ENCODE measurements at regions of chr3 and their contacts with region 1.

Region 1: GRCh38 chr3:184711493-184712247 is at the start of gene MAGEF1:
- DNase-seq: peak; percentile 79
- ATAC-seq: peak; percentile 97
- H3K4me3 ChIP-seq: peak within 1 kb of the TSS; percentile 75 to 94 (median 83)
- H3K27ac ChIP-seq: peak within 1 kb of the TSS; percentile 96
- H3K4me1 ChIP-seq: peaks cover 27% of the 10 kb centered on the region
- H3K27me3 ChIP-seq: no peaks in the 10 kb centered on the region; a peak in 1 of 5 replicates
- CTCF ChIP-seq: no peak
- EP300 ChIP-seq: no peak
- POLR2A ChIP-seq: peak; percentile 88 to 90
- RAD21 ChIP-seq: no peak; the same call in none of the 2 replicates
- total RNA-seq, gene MAGEF1: 60.5 and 62.4 TPM in 2 replicates

Region 2: GRCh38 chr3:184568924-184569829 is 142.5 kb before region 1 on chr3:
- CTCF ChIA-PET with region 1: no interaction called
- POLR2A ChIA-PET with region 1: no interaction called
- in situ Hi-C with region 1: no loop called
- intact Hi-C with region 1: loop called (anchors 5 kb)
- DNase-seq: no peak
- ATAC-seq: peak; percentile 31
- H3K4me3 ChIP-seq: peak overlapping the region in 2 of 3 experiments; percentile 7 to 33; a peak in 1 of 6 replicates
- H3K27ac ChIP-seq: no peak overlapping the region
- H3K4me1 ChIP-seq: no peaks in the 10 kb centered on the region
- H3K27me3 ChIP-seq: peaks cover 21 to 76% of the 10 kb centered on the region in 2 experiments
- CTCF ChIP-seq: no peak
- EP300 ChIP-seq: no peak
- POLR2A ChIP-seq: no peak
- RAD21 ChIP-seq: no peak

Region 3: GRCh38 chr3:185613016-185613415 is 901.3 kb after region 1 on chr3:
- CTCF ChIA-PET with region 1: no interaction called
- POLR2A ChIA-PET with region 1: no interaction called
- in situ Hi-C with region 1: no loop called
- intact Hi-C with region 1: no loop called
- DNase-seq: no peak
- ATAC-seq: no peak
- H3K4me3 ChIP-seq: no peak overlapping the region
- H3K27ac ChIP-seq: no peak overlapping the region
- H3K4me1 ChIP-seq: no peaks in the 10 kb centered on the region
- H3K27me3 ChIP-seq: no peaks in the 10 kb centered on the region
- CTCF ChIP-seq: no peak
- EP300 ChIP-seq: no peak
- POLR2A ChIP-seq: no peak
- RAD21 ChIP-seq: no peak

Measured in HepG2 (cell line).